GM12878 (cell line): ENCODE measurements at regions of chr15 and their contacts with region 1.

Region 1: GRCh38 chr15:22895469-22896190 is 57.2 kb downstream of the NIPA2 start:
- DNase-seq: peak; percentile 1
- ATAC-seq: peak; percentile 82
- H3K4me3 ChIP-seq: no peak overlapping the region
- H3K27ac ChIP-seq: no peak overlapping the region
- H3K4me1 ChIP-seq: no peaks in the 10 kb centered on the region
- H3K27me3 ChIP-seq: no peaks in the 10 kb centered on the region
- CTCF ChIP-seq: no peak
- EP300 ChIP-seq: no peak
- POLR2A ChIP-seq: no peak
- RAD21 ChIP-seq: no peak

Region 2: GRCh38 chr15:22949074-22949547 is 53.5 kb after region 1 on chr15:
- CTCF ChIA-PET with region 1: no interaction called
- POLR2A ChIA-PET with region 1: no interaction called
- RAD21 ChIA-PET with region 1: no interaction called
- SMC1A ChIA-PET with region 1: no interaction called
- in situ Hi-C with region 1: loop called (anchors 10 kb)
- intact Hi-C with region 1: no loop called
- DNase-seq: no peak
- ATAC-seq: peak; percentile 93
- H3K4me3 ChIP-seq: peak overlapping the region; percentile 35; the same call in 1 of the 2 replicates
- H3K27ac ChIP-seq: no peak overlapping the region
- H3K4me1 ChIP-seq: peaks cover 5% of the 10 kb centered on the region; the same call in 1 of the 2 replicates
- H3K27me3 ChIP-seq: no peaks in the 10 kb centered on the region
- CTCF ChIP-seq: no peak
- EP300 ChIP-seq: no peak
- POLR2A ChIP-seq: no peak
- RAD21 ChIP-seq: no peak